ENCODE measurements at regions of chr13 and their contacts with region 1.

Region 1: DNA sequence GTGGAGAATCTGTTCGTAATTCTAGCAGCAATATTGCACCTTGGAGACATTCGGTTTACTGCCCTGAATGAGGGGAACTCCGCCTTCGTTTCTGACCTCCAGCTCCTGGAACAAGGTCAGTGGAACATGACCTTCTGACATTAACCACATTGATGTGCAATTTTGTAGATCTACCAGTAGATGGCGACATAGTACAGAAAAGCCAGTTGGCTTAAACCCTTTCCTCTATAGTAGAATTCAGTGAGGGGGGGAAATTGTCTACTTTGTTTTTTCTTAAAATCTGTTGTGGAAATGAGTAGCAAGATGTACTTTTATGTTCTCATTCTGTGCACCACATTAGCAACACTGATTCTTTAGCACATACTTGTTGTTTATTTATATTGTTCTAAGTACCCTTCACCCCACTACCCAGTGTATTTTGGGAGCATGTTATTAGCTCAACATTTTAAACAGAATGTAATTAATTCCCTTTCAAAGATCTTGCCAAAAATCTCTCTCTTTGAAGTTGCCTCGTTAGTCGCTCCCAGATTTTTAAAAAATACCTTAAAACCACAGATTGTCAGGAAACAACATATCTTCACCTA is 332.2 kb downstream of the MYO16 start:
- DNase-seq: peak; percentile 31
- ATAC-seq: peak; percentile 61
- H3K4me3 ChIP-seq: no peak overlapping the region
- H3K27ac ChIP-seq: no peak overlapping the region
- H3K4me1 ChIP-seq: peaks cover 5 to 15% of the 10 kb centered on the region in 2 experiments; a peak in 3 of 4 replicates
- H3K27me3 ChIP-seq: no peaks in the 10 kb centered on the region
- CTCF ChIP-seq: peak; percentile 59 to 88 (median 78)
- POLR2A ChIP-seq: no peak
- RAD21 ChIP-seq: peak; percentile 92

Region 2: DNA sequence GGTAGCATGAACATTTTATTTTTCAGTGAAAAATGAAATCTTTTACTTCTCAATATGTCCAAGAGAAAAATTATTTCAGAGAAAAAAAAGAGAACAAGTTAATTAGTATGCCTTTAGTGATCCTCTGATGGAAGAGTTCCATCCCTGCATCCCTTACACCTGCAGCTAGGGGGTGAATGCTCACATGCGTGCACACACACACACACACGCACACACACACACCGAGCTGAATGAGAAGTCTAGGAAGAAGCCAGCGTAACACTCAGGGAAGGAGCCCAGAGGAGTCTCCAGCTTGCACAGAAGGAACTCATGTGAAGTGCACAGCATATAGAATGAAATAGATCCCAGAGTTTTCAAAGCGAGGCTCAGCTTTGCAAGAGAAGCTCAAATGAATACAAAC is 314.2 kb after region 1 on chr13:
- CTCF ChIA-PET with region 1: no interaction called
- POLR2A ChIA-PET with region 1: no interaction called
- RAD21 ChIA-PET with region 1: no interaction called
- intact Hi-C with region 1: loop called (anchors 10 kb)
- DNase-seq: no peak
- ATAC-seq: peak; percentile 28
- H3K4me3 ChIP-seq: no peak overlapping the region
- H3K27ac ChIP-seq: no peak overlapping the region
- H3K4me1 ChIP-seq: peaks cover 38 to 48% of the 10 kb centered on the region in 2 experiments
- H3K27me3 ChIP-seq: no peaks in the 10 kb centered on the region
- CTCF ChIP-seq: peak; percentile 4 to 77 (median 66); a peak in 4 of 6 replicates
- POLR2A ChIP-seq: no peak
- RAD21 ChIP-seq: peak; percentile 28; the same call in 1 of the 2 replicates

Region 3: DNA sequence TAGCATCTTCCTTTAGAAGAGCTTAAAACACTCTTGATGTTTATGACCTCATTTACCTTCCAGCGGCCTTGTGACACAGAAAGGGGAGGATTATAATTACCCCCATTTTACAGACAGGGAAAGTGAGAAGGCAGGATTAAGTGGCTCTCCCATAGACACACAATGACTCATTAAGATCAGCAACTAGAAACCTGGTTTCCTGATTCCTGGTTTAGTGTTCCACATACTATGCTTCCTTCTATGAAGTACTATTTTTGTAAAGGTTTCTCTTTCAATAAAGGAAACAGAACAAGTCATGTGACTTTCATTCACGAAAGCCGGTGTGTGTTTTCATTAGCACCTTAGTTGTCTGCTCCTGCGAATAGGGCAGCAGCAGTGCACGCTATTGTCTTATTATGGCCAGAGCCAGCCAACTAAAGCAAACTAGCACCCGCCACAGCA is 816.5 kb after region 1 on chr13:
- CTCF ChIA-PET with region 1: no interaction called
- POLR2A ChIA-PET with region 1: no interaction called
- RAD21 ChIA-PET with region 1: no interaction called
- intact Hi-C with region 1: loop called (anchors 5 kb)
- DNase-seq: no peak
- ATAC-seq: peak; percentile 27; the same call in 1 of the 2 replicates
- H3K4me3 ChIP-seq: peak overlapping the region in 1 of 2 experiments; percentile 6; a peak in 1 of 4 replicates
- H3K27ac ChIP-seq: no peak overlapping the region
- H3K4me1 ChIP-seq: peaks cover 12 to 49% of the 10 kb centered on the region in 2 experiments; a peak in 3 of 4 replicates
- H3K27me3 ChIP-seq: no peaks in the 10 kb centered on the region
- CTCF ChIP-seq: no peak
- POLR2A ChIP-seq: no peak
- RAD21 ChIP-seq: 0 out of 2 replicates have a peak, but pooled peaks have one; percentile 5

Region 4: GRCh38 chr13:109786457-109787134 is 825.0 kb after region 1 on chr13 and contains the start of gene IRS2:
- CTCF ChIA-PET with region 1: interaction called, 3 read pairs
- POLR2A ChIA-PET with region 1: no interaction called
- RAD21 ChIA-PET with region 1: no interaction called
- intact Hi-C with region 1: loop called (anchors 2 kb)
- DNase-seq: peak; percentile 81
- ATAC-seq: peak; percentile 80
- H3K4me3 ChIP-seq: peak within 1 kb of the TSS; percentile 55 to 70
- H3K27ac ChIP-seq: peak within 1 kb of the TSS; percentile 73
- H3K4me1 ChIP-seq: peaks cover 0 to 21% of the 10 kb centered on the region in 2 experiments; a peak in 3 of 4 replicates
- H3K27me3 ChIP-seq: no peaks in the 10 kb centered on the region
- CTCF ChIP-seq: no peak
- POLR2A ChIP-seq: peak; percentile 56
- RAD21 ChIP-seq: no peak
- total RNA-seq, gene IRS2: 9.2 TPM

Measured in HCT116 (cell line).